Breast epithelium (tissue), 4 donors: ENCODE measurements at regions of chr22 and their contacts with region 1.

Region 1: GRCh38 chr22:39090426-39091064 is 6.5 kb upstream of the APOBEC3H start:
- DNase-seq: peak in 1 of 2 donors; percentile 32
- H3K4me3 ChIP-seq: no peak overlapping the region
- H3K27ac ChIP-seq: peak overlapping the region in 1 of 2 donors; percentile 43
- H3K4me1 ChIP-seq: no peaks in the 10 kb centered on the region
- H3K27me3 ChIP-seq: no peaks in the 10 kb centered on the region
- CTCF ChIP-seq: no peak
- POLR2A ChIP-seq: no peak

Region 2: GRCh38 chr22:37139762-37140161 is 1950.8 kb before region 1 on chr22:
- intact Hi-C with region 1: loop called (anchors 10 kb)
- DNase-seq: no peak
- H3K4me3 ChIP-seq: no peak overlapping the region
- H3K27ac ChIP-seq: no peak overlapping the region
- H3K4me1 ChIP-seq: no peaks in the 10 kb centered on the region
- H3K27me3 ChIP-seq: no peaks in the 10 kb centered on the region
- CTCF ChIP-seq: no peak
- POLR2A ChIP-seq: no peak

Region 3: DNA sequence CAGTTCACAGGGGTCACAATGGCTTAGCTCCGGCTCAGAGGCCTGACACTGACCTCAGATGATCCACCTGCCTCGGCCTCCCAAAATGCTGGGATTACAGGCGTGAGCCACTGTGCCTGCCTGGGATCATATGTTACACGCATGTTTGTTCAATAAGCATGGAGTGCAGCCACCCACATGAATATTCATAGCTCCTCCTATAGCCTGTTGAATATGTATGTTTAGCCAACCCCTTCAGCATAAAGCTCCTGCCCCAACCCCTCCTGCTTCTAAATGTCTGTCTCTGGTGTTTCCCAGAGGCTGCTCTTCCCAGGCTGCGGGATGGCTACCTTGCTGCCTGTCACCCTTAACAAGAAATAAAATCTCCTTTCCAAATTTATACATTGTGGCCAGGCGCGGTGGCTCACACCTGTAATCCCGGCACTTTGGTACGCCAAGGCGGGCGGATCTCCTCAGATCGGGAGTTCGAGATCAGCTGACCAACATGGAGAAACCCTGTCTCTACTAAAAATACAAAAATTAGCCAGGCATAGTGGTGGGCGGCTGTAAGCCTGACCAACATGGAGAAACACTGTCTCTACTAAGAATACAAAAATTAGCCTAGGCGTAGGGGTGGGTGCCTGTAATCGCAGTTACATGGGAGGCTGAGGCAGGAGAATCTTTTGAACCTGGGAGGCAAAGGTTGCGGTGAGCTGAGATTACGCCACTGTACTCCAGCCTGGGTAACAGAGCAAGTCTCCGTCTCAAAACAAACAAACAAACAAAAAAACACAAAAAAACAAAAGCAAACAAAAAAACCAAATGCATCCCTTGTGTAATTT is 51.0 kb before region 1 on chr22:
- intact Hi-C with region 1: no loop called
- DNase-seq: no peak
- H3K4me3 ChIP-seq: no peak overlapping the region
- H3K27ac ChIP-seq: peak overlapping the region; percentile 92 to 97
- H3K4me1 ChIP-seq: peaks cover 6% of the 10 kb centered on the region in 2 donors
- H3K27me3 ChIP-seq: no peaks in the 10 kb centered on the region
- CTCF ChIP-seq: no peak
- POLR2A ChIP-seq: no peak

Region 4: DNA sequence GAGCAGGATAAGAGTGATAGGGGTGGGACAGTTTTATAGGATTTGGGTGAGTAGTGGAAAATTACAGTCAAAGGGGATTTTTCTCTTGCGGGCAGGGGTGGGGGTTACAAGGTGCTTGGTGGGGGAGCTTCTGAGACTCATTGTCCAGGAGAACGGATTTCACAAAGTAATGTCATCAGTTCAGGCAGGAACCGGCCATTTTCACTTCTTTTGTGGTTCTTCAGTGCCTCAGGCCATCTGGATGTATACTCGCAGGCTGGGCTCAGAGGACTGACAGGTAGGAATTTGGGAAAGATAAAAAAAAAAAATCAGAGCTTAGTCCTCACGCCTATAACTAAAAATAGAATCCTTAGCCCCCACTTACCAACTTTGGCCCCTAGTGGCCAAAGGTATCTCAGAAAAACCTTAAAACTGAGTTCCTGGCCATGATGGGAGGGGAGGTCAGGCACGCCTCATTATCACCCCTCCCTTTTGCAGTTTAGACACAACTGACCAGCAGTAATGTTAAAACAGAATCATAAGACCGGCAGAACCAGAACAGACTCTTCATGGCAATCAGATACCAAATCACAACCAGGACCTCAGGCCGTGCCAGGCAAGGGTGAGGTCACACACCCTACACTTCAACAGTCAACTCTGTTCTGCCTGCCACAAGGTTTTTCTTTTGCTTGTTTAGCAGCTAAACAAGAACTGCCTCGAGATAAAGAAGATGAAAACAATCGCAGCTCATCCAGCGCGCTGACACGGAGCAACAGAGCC is 22.3 kb before region 1 on chr22:
- intact Hi-C with region 1: loop called (anchors 2 kb)
- DNase-seq: no peak
- H3K4me3 ChIP-seq: no peak overlapping the region
- H3K27ac ChIP-seq: no peak overlapping the region
- H3K4me1 ChIP-seq: no peaks in the 10 kb centered on the region
- H3K27me3 ChIP-seq: no peaks in the 10 kb centered on the region
- CTCF ChIP-seq: no peak
- POLR2A ChIP-seq: no peak